ENCODE measurements at regions of chr6 and their contacts with region 1.

Region 1: GRCh38 chr6:170529839-170530469 is 23.2 kb downstream of the PSMB1 start:
- DNase-seq: peak; percentile 62 to 93 (median 86)

Region 2: GRCh38 chr6:169789982-169790927 is 739.7 kb before region 1 on chr6:
- intact Hi-C with region 1: loop called (anchors 5 kb)
- DNase-seq: peak; percentile 47 to 93 (median 84)

Region 3: GRCh38 chr6:170243791-170244291 is 286.1 kb before region 1 on chr6:
- intact Hi-C with region 1: no loop called
- DNase-seq: peak in 41 of 42 donors; percentile 32 to 84 (median 65)

Region 4: DNA sequence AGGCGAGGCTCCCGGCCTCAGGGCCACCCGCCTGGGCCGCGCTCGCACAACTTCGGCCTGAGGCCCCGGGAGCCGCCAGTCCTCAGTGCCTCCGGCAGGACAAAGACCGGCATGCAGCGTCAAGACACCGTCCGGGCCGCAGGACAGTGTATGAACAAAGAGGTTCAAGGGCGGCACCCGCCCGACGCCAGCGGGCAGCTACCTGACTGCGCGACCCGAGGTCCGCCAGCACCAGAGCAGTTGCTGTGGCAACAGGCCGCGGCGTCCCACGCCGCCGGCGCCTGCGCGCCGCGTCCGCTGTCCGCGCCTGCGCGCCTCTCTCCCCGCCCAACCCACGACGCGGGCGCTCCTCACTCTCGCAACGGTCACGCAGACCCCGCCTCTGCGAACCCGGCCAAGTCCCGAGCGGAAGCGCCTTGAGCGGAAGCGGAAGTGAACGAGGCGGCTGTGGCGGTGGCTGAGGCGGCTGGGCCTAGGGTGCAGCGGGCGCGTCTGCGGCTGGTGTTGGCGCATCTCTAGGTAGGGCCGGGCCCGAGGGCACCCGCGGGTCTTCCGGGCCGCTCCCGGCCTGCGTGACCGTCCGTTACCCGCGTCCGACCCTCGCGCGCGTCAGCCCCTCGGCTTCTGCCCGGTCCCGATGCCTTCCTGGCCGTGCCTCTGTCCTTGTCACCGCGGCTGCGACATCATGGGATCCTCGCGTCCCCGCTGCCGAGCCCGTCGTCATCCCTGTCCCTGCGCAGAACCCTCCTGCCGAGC is 223.5 kb before region 1 on chr6 and contains the start of gene FAM120B:
- intact Hi-C with region 1: loop called (anchors 10 kb)
- DNase-seq: peak; percentile 92 to 99 (median 98)

Region 5: DNA sequence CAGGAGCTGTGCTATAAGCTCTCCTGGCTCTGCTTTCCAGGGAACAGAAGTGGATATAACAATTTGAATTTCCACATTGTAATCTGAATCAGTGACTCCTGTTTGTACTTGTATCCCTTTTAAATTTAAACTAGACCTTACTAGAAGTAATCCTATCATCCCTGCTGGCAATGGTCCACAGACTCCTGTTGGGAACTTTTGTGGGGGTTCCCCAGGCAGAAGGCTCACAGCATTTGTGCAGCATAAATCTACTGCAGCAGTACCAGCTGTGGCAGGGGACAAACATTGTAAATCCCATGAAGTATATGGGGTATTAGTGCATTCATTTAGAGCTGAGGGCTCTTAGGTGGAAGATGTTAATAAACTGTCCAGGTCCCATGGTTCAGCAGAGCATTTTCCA is 66.5 kb after region 1 on chr6:
- intact Hi-C with region 1: no loop called
- DNase-seq: no peak